ENCODE measurements at regions of chr7 and their contacts with region 1.

Region 1: GRCh38 chr7:954330-955238 is at the start of gene ADAP1:
- DNase-seq: no peak
- ATAC-seq: peak; percentile 57
- H3K4me3 ChIP-seq: peak within 1 kb of the TSS; percentile 84
- H3K27ac ChIP-seq: peak within 1 kb of the TSS; percentile 69
- H3K4me1 ChIP-seq: peaks cover 28% of the 10 kb centered on the region
- H3K27me3 ChIP-seq: no peaks in the 10 kb centered on the region
- CTCF ChIP-seq: peak; percentile 20 to 65 (median 32); a peak in 3 of 6 replicates
- EP300 ChIP-seq: no peak
- POLR2A ChIP-seq: no peak; the same call in 1 of the 2 replicates
- RAD21 ChIP-seq: peak; percentile 75
- polyA plus RNA-seq, gene ADAP1: 0.22 TPM in 1 of 2 experiments, not detected in the other

Region 2: GRCh38 chr7:604001-604883 is 350.3 kb before region 1 on chr7:
- CTCF ChIA-PET with region 1: no interaction called
- POLR2A ChIA-PET with region 1: no interaction called
- RAD21 ChIA-PET with region 1: no interaction called
- SMC1A ChIA-PET with region 1: no interaction called
- in situ Hi-C with region 1: no loop called
- intact Hi-C with region 1: loop called (anchors 5 kb)
- DNase-seq: peak; percentile 71
- ATAC-seq: peak; percentile 81
- H3K4me3 ChIP-seq: peak overlapping the region; percentile 80
- H3K27ac ChIP-seq: peak overlapping the region; percentile 98
- H3K4me1 ChIP-seq: peaks cover 49% of the 10 kb centered on the region
- H3K27me3 ChIP-seq: no peaks in the 10 kb centered on the region
- CTCF ChIP-seq: no peak
- EP300 ChIP-seq: no peak; a peak in 1 of 4 replicates
- POLR2A ChIP-seq: peak; percentile 96
- RAD21 ChIP-seq: no peak

Region 3: GRCh38 chr7:909358-910329 is 44.9 kb before region 1 on chr7:
- CTCF ChIA-PET with region 1: interaction called, 31 read pairs
- POLR2A ChIA-PET with region 1: interaction called, 13 read pairs
- RAD21 ChIA-PET with region 1: interaction called, 18 read pairs
- SMC1A ChIA-PET with region 1: interaction called, 31 read pairs
- in situ Hi-C with region 1: no loop called
- intact Hi-C with region 1: loop called (anchors 1 kb)
- DNase-seq: no peak
- ATAC-seq: peak; percentile 69
- H3K4me3 ChIP-seq: peak overlapping the region; percentile 51; the same call in 1 of the 2 replicates
- H3K27ac ChIP-seq: peak overlapping the region; percentile 38
- H3K4me1 ChIP-seq: peaks cover 16% of the 10 kb centered on the region
- H3K27me3 ChIP-seq: no peaks in the 10 kb centered on the region
- CTCF ChIP-seq: no peak
- EP300 ChIP-seq: no peak
- POLR2A ChIP-seq: no peak
- RAD21 ChIP-seq: no peak

Region 4: GRCh38 chr7:929311-929711 is 25.3 kb before region 1 on chr7:
- CTCF ChIA-PET with region 1: interaction called, 13 read pairs
- POLR2A ChIA-PET with region 1: interaction called, 17 read pairs
- RAD21 ChIA-PET with region 1: interaction called, 35 read pairs
- SMC1A ChIA-PET with region 1: interaction called, 12 read pairs
- in situ Hi-C with region 1: no loop called
- intact Hi-C with region 1: no loop called
- DNase-seq: no peak
- ATAC-seq: no peak
- H3K4me3 ChIP-seq: no peak overlapping the region
- H3K27ac ChIP-seq: peak overlapping the region; percentile 51
- H3K4me1 ChIP-seq: peaks cover 43% of the 10 kb centered on the region
- H3K27me3 ChIP-seq: no peaks in the 10 kb centered on the region
- CTCF ChIP-seq: no peak
- EP300 ChIP-seq: no peak
- POLR2A ChIP-seq: no peak
- RAD21 ChIP-seq: no peak

Region 5: DNA sequence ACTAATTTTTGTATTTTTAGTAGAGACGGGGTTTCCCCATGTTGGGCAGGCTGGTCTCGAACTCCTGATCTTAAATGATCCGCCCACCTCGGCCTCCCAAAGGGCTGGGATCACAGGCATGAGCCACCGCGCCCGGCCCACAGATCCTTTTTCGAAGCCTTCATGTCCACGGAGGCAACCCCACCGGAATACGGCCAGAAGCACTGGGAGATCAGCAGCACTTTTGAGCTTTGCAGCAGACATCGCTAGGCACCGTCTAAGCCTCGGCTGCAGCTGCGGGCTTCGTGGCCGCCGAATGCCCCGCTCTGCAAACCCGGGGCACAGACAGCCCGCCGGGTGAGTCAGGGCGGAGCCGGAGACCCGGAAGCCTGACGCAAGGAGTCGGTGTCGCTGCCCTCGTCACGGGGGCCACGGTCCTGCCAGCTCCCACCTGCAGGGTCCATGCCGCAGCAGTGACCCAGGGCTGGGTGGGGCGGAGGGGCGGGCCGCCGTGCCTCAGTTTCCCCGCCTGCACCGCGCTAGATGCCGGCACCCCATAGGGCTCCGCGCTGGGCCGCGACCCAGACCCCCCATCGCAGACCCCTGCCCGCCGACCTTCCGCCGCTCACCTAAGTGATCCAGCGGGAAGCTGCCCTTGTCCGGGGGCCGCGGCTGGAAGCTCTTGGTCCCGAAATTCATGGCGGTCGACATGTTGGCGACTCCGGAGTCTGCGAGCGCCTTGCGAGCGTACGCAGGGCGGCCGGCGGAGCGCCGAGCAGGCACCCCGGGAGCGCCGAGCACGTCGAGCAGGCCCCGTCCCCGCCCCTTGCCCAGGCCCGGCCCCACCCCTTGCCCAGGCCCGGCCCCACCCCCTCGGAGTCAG is 20.5 kb after region 1 on chr7 and contains the start of gene COX19:
- CTCF ChIA-PET with region 1: interaction called, 6 read pairs
- POLR2A ChIA-PET with region 1: interaction called, 7 read pairs
- RAD21 ChIA-PET with region 1: interaction called, 16 read pairs
- SMC1A ChIA-PET with region 1: interaction called, 16 read pairs
- in situ Hi-C with region 1: no loop called
- intact Hi-C with region 1: no loop called
- DNase-seq: peak; percentile 42
- ATAC-seq: peak; percentile 87
- H3K4me3 ChIP-seq: peak within 1 kb of the TSS; percentile 78
- H3K27ac ChIP-seq: peak within 1 kb of the TSS; percentile 86
- H3K4me1 ChIP-seq: no peaks in the 10 kb centered on the region
- H3K27me3 ChIP-seq: no peaks in the 10 kb centered on the region
- CTCF ChIP-seq: no peak
- EP300 ChIP-seq: no peak
- POLR2A ChIP-seq: peak; percentile 94
- RAD21 ChIP-seq: no peak
- polyA plus RNA-seq, gene COX19: 3.7 to 6.6 TPM